K562 (cell line): ENCODE measurements at regions of chr2 and their contacts with region 1.

Region 1: GRCh38 chr2:230902180-230902899 is 22.7 kb downstream of the GPR55 start:
- DNase-seq: peak; percentile 60 to 78 (median 60)
- ATAC-seq: peak; percentile 85
- H3K4me3 ChIP-seq: no peak overlapping the region
- H3K27ac ChIP-seq: no peak overlapping the region
- H3K4me1 ChIP-seq: peaks cover 18 to 20% of the 10 kb centered on the region in 2 experiments
- H3K27me3 ChIP-seq: peaks cover 0 to 10% of the 10 kb centered on the region in 2 experiments; a peak in 2 of 5 replicates
- CTCF ChIP-seq: peak; percentile 81 to 91 (median 85)
- EP300 ChIP-seq: no peak
- POLR2A ChIP-seq: no peak
- RAD21 ChIP-seq: peak; percentile 81 to 88

Region 2: DNA sequence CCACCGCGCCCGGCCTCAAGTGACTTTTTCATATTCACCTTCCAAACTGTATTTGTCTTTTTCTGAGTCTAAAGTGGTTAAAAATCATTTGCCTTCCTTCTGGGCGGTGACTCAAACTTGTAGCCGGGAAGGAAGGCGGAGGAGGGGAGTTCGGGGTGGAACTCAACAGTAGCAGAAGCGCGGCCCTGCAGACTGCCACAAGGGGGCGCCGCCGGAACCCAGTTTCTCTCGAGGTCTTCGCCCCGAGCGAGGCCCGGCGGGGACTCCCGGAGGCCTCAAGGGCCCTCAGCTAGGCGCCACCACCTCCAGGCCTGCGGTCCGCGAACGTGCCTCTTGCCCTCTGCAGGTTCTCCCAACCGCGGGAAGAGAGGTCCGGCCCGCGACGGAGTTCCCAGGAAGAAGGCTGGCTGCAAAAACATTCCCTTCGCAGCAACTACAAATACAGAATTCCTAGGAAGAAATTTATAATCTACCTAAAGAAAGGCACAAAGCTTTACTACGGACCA is 54.4 kb before region 1 on chr2:
- CTCF ChIA-PET with region 1: no interaction called
- POLR2A ChIA-PET with region 1: no interaction called
- in situ Hi-C with region 1: no loop called
- intact Hi-C with region 1: loop called (anchors 2 kb)
- DNase-seq: peak; percentile 77 to 87 (median 80)
- ATAC-seq: peak; percentile 99
- H3K4me3 ChIP-seq: no peak overlapping the region
- H3K27ac ChIP-seq: no peak overlapping the region
- H3K4me1 ChIP-seq: peaks cover 0 to 14% of the 10 kb centered on the region in 2 experiments; a peak in 2 of 5 replicates
- H3K27me3 ChIP-seq: peaks cover 0 to 6% of the 10 kb centered on the region in 2 experiments; a peak in 2 of 5 replicates
- CTCF ChIP-seq: peak; percentile 70 to 78 (median 78)
- EP300 ChIP-seq: no peak
- POLR2A ChIP-seq: no peak
- RAD21 ChIP-seq: peak; percentile 21 to 61; a peak in 3 of 4 replicates

Region 3: DNA sequence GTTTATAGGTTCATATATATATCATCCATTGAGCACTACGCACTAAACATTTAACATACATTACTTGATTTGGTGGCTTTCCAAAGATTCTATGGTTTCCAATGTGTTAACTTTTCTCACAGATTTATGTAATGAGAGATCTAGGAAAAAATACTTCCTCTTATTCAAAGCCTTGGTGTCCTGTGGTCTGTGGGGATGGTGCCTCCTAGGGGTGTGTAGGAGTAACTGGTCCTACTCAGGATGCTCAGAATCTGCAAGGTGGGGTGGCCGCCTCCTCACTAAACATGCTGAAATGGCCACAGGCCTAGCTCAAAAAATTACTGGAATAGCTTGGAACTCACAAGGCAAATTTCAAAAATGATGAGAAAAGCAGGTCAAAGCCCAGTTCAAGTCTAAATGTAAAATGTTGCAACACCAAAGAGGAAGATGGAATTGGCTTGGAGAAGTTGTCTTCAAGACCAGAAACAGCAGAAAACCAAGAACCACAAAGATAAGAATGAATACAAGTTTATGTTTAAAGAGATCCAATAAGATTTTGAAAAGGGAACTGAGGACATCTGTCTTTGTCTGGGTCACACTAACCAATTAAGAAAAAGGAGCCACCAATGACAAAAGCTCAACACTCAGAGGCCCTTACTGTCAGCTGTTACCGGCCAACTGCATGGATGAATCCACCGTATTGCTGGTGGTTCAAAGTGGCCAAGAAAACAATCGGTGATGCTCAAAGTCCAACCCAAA is 11.2 kb after region 1 on chr2:
- CTCF ChIA-PET with region 1: interaction called, 5 read pairs
- POLR2A ChIA-PET with region 1: no interaction called
- in situ Hi-C with region 1: no loop called
- intact Hi-C with region 1: loop called (anchors 1 kb)
- DNase-seq: peak; percentile 53 to 62 (median 58)
- ATAC-seq: peak; percentile 67; the same call in 2 of the 3 replicates
- H3K4me3 ChIP-seq: no peak overlapping the region
- H3K27ac ChIP-seq: no peak overlapping the region
- H3K4me1 ChIP-seq: peaks cover 6 to 24% of the 10 kb centered on the region in 2 experiments; a peak in 4 of 5 replicates
- H3K27me3 ChIP-seq: no peaks in the 10 kb centered on the region
- CTCF ChIP-seq: peak; percentile 64 to 71 (median 67); a peak in 5 of 6 replicates
- EP300 ChIP-seq: no peak
- POLR2A ChIP-seq: no peak
- RAD21 ChIP-seq: peak; percentile 59 to 74

Region 4: GRCh38 chr2:231056453-231057424 is 154.4 kb after region 1 on chr2 and contains the start of gene PSMD1:
- CTCF ChIA-PET with region 1: no interaction called
- POLR2A ChIA-PET with region 1: no interaction called
- in situ Hi-C with region 1: no loop called
- intact Hi-C with region 1: loop called (anchors 10 kb)
- DNase-seq: peak; percentile 84 to 92 (median 88)
- ATAC-seq: peak; percentile 86
- H3K4me3 ChIP-seq: peak within 1 kb of the TSS; percentile 90
- H3K27ac ChIP-seq: peak within 1 kb of the TSS; percentile 98
- H3K4me1 ChIP-seq: peaks cover 9 to 11% of the 10 kb centered on the region in 2 experiments; a peak in 4 of 5 replicates
- H3K27me3 ChIP-seq: no peaks in the 10 kb centered on the region
- CTCF ChIP-seq: peak; percentile 74 to 88 (median 84)
- EP300 ChIP-seq: no peak; the same call in 1 of the 2 replicates
- POLR2A ChIP-seq: peak; percentile 78
- RAD21 ChIP-seq: no peak
- polyA plus RNA-seq, gene PSMD1: 117 to 147 TPM